CD8-positive, alpha-beta memory T cell (primary cell): ENCODE measurements at regions of chr9 and their contacts with region 1.

Region 1: GRCh38 chr9:72280913-72281500 is 84.0 kb downstream of the ZFAND5 start:
- DNase-seq: peak; percentile 43 to 74 (median 54)
- H3K4me3 ChIP-seq: no peak overlapping the region
- H3K4me3 Mint-ChIP-seq: no peak overlapping the region
- H3K27ac ChIP-seq: no peak overlapping the region
- H3K27ac Mint-ChIP-seq: no peak overlapping the region
- H3K4me1 ChIP-seq: no peaks in the 10 kb centered on the region
- H3K4me1 Mint-ChIP-seq: no peaks in the 10 kb centered on the region
- H3K27me3 ChIP-seq: no peaks in the 10 kb centered on the region
- H3K27me3 Mint-ChIP-seq: peaks cover 0 to 4% of the 10 kb centered on the region in 2 donors

Region 2: GRCh38 chr9:72540348-72540873 is 259.4 kb after region 1 on chr9:
- CTCF ChIA-PET with region 1: no interaction called
- POLR2A ChIA-PET with region 1: no interaction called
- DNase-seq: no peak
- H3K4me3 ChIP-seq: no peak overlapping the region
- H3K4me3 Mint-ChIP-seq: no peak overlapping the region
- H3K27ac ChIP-seq: no peak overlapping the region
- H3K27ac Mint-ChIP-seq: no peak overlapping the region
- H3K4me1 ChIP-seq: no peaks in the 10 kb centered on the region
- H3K4me1 Mint-ChIP-seq: no peaks in the 10 kb centered on the region
- H3K27me3 ChIP-seq: no peaks in the 10 kb centered on the region
- H3K27me3 Mint-ChIP-seq: no peaks in the 10 kb centered on the region

Region 3: DNA sequence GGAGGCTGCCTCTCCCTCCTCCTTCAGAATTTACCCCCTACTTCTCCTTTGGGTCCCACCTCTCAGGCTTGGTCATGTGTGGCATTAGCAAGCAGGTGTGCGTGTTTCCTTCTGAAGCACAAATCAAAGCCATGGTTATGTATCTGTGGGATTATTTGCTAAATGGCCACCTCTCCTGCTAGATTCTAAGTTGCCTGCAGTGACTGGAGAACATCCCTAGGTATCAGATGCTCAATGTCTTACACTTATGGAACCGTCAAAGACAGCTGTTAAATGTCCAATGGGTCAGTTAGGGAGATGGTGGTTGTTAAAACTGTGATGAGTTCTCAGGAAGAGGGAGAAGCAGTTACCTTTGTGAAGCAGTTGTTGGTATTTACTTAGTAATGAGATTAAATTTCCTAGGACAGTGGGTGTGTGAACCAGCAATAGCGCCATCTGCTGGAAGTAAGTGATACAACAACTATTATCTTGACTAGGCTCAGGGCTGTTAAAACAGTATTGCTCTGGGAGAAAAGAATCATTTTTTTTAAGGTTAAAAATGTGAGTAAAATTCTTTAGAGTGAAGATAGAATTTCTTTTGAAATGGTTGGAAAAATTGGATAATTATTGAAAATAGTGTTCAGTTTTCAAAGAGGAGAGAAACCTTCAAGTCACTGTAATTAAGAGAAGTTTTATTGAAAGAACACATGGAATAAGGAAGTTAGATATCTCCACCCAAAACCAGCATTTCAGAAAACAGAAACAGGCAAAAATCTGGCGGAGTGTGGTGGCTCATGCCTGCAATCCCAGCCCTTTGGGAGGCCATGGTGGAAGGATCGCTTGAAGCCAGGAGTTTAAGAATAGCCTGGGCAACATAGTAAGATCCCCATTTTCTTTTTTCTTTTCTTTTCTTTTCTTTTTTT is 311.7 kb after region 1 on chr9:
- CTCF ChIA-PET with region 1: interaction called, 76 read pairs
- POLR2A ChIA-PET with region 1: no interaction called
- DNase-seq: peak in 3 of 5 donors; percentile 38 to 51 (median 43)
- H3K4me3 ChIP-seq: no peak overlapping the region
- H3K4me3 Mint-ChIP-seq: no peak overlapping the region
- H3K27ac ChIP-seq: no peak overlapping the region
- H3K27ac Mint-ChIP-seq: no peak overlapping the region
- H3K4me1 ChIP-seq: no peaks in the 10 kb centered on the region
- H3K4me1 Mint-ChIP-seq: peaks cover 0 to 7% (median 5%) of the 10 kb centered on the region in 3 donors
- H3K27me3 ChIP-seq: no peaks in the 10 kb centered on the region
- H3K27me3 Mint-ChIP-seq: peaks cover 0 to 18% of the 10 kb centered on the region in 2 donors

Region 4: GRCh38 chr9:72827950-72828731 is 547.1 kb after region 1 on chr9:
- CTCF ChIA-PET with region 1: interaction called, 24 read pairs
- POLR2A ChIA-PET with region 1: no interaction called
- DNase-seq: no peak
- H3K4me3 ChIP-seq: no peak overlapping the region
- H3K4me3 Mint-ChIP-seq: no peak overlapping the region
- H3K27ac ChIP-seq: no peak overlapping the region
- H3K27ac Mint-ChIP-seq: no peak overlapping the region
- H3K4me1 ChIP-seq: no peaks in the 10 kb centered on the region
- H3K4me1 Mint-ChIP-seq: no peaks in the 10 kb centered on the region
- H3K27me3 ChIP-seq: no peaks in the 10 kb centered on the region
- H3K27me3 Mint-ChIP-seq: peaks cover 4 to 5% of the 10 kb centered on the region in 2 donors

Region 5: DNA sequence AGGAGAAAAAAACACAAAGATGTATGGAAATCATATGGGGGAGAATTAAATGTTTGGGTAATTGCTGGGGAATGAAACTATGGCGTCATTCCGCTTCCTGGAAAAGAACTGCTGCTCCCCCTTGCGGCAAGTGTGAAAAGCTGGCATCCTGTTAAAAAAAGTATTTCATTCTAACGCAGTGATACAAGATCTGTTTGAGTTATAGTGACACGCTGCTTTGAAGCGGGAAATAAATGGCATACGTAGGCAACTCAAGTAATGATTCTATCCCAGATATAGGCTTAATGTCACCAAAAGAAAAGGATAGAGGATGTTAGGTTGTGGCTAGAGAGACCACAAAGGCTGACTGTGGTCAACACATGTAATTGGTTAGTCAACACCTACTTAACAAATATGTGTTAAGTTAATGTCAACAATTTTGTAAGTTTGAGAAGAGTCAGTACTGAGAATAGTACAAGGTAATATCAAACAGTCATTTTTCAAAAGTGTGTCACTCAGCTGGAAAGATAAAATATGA is 742.1 kb after region 1 on chr9:
- CTCF ChIA-PET with region 1: interaction called, 15 read pairs
- POLR2A ChIA-PET with region 1: no interaction called
- DNase-seq: peak; percentile 5 to 47 (median 19)
- H3K4me3 ChIP-seq: no peak overlapping the region
- H3K4me3 Mint-ChIP-seq: peak overlapping the region in 4 of 7 donors; percentile 2 to 15 (median 8)
- H3K27ac ChIP-seq: no peak overlapping the region
- H3K27ac Mint-ChIP-seq: peak overlapping the region in 1 of 8 donors; percentile 34
- H3K4me1 ChIP-seq: no peaks in the 10 kb centered on the region
- H3K4me1 Mint-ChIP-seq: peaks cover 9 to 11% (median 10%) of the 10 kb centered on the region in 3 donors
- H3K27me3 ChIP-seq: no peaks in the 10 kb centered on the region
- H3K27me3 Mint-ChIP-seq: peaks cover 17 to 41% of the 10 kb centered on the region in 2 donors